Mucosa of descending colon (tissue), 3 donors: ENCODE measurements at regions of chr12 and their contacts with region 1.

Region 1: DNA sequence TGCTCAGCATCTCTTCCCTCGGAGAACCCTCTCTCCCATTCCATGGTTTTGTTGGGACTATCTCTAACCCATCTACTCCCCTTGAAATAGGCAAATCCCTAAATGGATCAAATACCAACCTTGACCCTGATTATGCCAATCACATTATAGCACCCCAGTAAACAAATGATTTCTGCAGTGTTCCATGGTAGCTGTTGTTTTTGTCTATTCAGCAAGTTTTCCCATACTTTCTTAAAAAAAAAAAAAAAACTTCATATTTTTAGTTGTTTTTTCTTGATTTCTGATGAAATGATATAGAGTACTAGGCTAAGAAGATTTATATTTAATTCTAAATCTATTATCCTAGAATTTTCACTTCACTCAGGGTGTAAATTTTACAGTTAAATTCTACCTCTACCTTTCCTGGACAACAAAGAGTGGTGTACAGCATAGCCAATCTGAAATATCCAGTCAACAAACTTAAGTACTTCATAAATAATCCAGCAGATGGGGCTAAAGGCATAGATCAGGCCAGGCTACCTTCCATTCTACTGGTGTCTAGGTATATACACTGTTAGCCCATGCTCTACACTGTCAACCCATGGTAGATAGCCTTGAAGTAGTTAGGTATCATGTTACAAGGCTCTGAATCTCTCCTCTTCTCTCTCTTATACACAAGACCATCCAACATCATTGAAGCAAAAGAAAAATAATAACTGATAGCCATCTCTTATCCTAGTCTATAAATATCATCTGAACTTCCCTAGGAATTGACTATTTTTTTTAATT is 82.2 kb downstream of the PLEKHG7 start:
- DNase-seq: peak in 1 of 3 donors; percentile 25
- ATAC-seq: peak; percentile 97
- H3K4me3 ChIP-seq: no peak overlapping the region
- H3K4me1 ChIP-seq: no peaks in the 10 kb centered on the region
- CTCF ChIP-seq: no peak

Region 2: GRCh38 chr12:92656911-92657310 is 128.1 kb before region 1 on chr12:
- intact Hi-C with region 1: no loop called
- DNase-seq: no peak
- ATAC-seq: no peak
- H3K4me3 ChIP-seq: no peak overlapping the region
- H3K4me1 ChIP-seq: no peaks in the 10 kb centered on the region
- CTCF ChIP-seq: no peak

Region 3: DNA sequence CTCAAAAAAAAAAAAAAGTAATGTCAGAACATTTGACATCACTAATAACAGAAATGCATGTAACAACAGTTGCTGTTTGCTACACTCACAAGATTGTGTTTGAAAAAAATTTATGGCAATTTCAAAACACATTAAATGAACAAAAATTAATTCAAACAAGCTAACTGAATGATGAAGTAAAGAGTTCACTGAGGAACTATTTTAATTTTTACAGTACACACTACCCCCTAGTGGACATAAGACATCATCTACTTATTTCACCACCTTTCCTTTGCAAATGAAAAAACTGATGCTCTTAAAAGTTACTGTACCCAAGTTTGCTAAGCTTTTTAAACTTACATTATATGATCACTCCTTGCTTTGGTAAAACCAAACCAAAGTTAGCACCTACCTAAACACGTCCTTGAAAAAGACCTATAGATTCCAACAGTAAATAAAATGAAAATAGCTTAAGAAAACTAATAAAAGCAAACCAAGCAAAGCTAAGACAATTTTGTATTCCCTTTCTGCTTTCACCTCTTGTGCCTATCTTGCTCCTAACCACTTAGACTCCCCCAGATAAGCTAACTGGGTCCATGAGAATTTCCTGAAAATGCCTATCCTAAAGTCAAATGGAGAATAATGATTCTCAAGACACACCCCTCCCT is 634.5 kb after region 1 on chr12:
- intact Hi-C with region 1: loop called in 1 of 2 experiments (anchors 10 kb)
- DNase-seq: no peak
- ATAC-seq: peak; percentile 84
- H3K4me3 ChIP-seq: no peak overlapping the region
- H3K4me1 ChIP-seq: no peaks in the 10 kb centered on the region
- CTCF ChIP-seq: peak; percentile 30